A673 (cell line): ENCODE measurements at regions of chr14 and their contacts with region 1.

Region 1: GRCh38 chr14:90903101-90903500 is 86.9 kb upstream of the TTC7B start:
- DNase-seq: peak; percentile 70
- H3K4me3 ChIP-seq: no peak overlapping the region
- H3K27ac ChIP-seq: no peak overlapping the region
- H3K4me1 ChIP-seq: no peaks in the 10 kb centered on the region
- H3K27me3 ChIP-seq: no peaks in the 10 kb centered on the region
- CTCF ChIP-seq: peak; percentile 89

Region 2: GRCh38 chr14:91060351-91061055 is 157.4 kb after region 1 on chr14 and contains the start of gene RPS6KA5:
- CTCF ChIA-PET with region 1: interaction called, 3 read pairs
- POLR2A ChIA-PET with region 1: no interaction called
- intact Hi-C with region 1: loop called (anchors 10 kb)
- DNase-seq: peak; percentile 100
- H3K4me3 ChIP-seq: peak within 1 kb of the TSS; percentile 79
- H3K27ac ChIP-seq: peak within 1 kb of the TSS; percentile 78
- H3K4me1 ChIP-seq: peaks cover 18% of the 10 kb centered on the region
- H3K27me3 ChIP-seq: no peaks in the 10 kb centered on the region
- CTCF ChIP-seq: no peak; the same call in 1 of the 2 replicates
- total RNA-seq, gene RPS6KA5: 7.6 and 7.9 TPM in 2 replicates

Region 3: DNA sequence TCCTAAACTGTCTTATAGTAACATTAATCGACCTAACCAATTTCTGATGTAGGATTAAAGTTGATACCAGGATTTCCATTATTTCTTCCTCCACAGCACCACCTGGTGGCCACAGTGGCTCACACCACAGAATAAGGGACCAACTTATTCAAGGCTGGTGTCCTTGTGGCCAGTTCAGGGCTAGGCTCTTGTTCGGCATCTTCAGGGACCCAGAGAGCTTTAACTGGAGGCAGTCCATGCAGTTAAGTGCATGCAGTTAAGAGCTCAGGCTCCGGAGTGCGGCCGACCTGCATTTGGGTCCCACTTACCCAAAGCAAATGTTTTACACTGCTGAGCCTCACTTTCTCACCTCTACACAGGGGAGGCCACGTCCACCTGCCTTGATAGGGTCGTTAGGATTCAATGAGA is 383.4 kb after region 1 on chr14:
- CTCF ChIA-PET with region 1: interaction called, 4 read pairs
- POLR2A ChIA-PET with region 1: no interaction called
- intact Hi-C with region 1: loop called (anchors 2 kb)
- DNase-seq: peak; percentile 87
- H3K4me3 ChIP-seq: no peak overlapping the region
- H3K27ac ChIP-seq: no peak overlapping the region
- H3K4me1 ChIP-seq: peaks cover 35% of the 10 kb centered on the region
- H3K27me3 ChIP-seq: no peaks in the 10 kb centered on the region
- CTCF ChIP-seq: peak; percentile 95